H1 (cell line): ENCODE measurements at regions of chr5 and their contacts with region 1.

Region 1: GRCh38 chr5:31232273-31232888 is 38.9 kb downstream of the CDH6 start:
- DNase-seq: peak in 1 of 2 experiments; percentile 2
- H3K4me3 ChIP-seq: no peak overlapping the region
- H3K27ac ChIP-seq: no peak overlapping the region
- H3K4me1 ChIP-seq: peaks cover 0 to 3% (median 0%) of the 10 kb centered on the region in 4 experiments; a peak in 1 of 7 replicates
- H3K27me3 ChIP-seq: no peaks in the 10 kb centered on the region
- CTCF ChIP-seq: peak in 2 of 3 experiments; percentile 75; a peak in 3 of 4 replicates
- EP300 ChIP-seq: no peak
- POLR2A ChIP-seq: no peak
- RAD21 ChIP-seq: peak; percentile 90 to 96

Region 2: DNA sequence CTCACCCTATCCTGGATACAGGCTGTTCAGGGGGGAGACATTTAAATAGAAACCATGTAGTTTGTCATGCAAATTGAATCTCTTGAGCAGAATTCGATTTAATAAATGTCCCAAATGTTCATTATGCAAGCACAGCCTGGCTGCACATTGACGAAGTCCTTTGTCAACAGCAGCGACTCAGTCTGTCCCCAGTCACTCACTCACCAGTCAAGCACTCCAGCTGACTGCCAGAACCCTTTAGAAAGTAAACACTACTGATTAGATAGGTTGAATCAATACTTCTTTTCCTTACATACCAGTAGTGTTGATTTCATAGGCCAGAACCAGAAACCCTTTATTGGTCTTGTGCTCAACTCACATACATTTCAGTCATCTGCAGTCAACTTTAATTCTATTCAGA is 11.4 kb before region 1 on chr5:
- CTCF ChIA-PET with region 1: interaction called, 14 read pairs
- POLR2A ChIA-PET with region 1: no interaction called
- DNase-seq: no peak
- H3K4me3 ChIP-seq: no peak overlapping the region
- H3K27ac ChIP-seq: no peak overlapping the region
- H3K4me1 ChIP-seq: no peaks in the 10 kb centered on the region
- H3K27me3 ChIP-seq: no peaks in the 10 kb centered on the region
- CTCF ChIP-seq: no peak
- EP300 ChIP-seq: no peak
- POLR2A ChIP-seq: no peak
- RAD21 ChIP-seq: no peak

Region 3: DNA sequence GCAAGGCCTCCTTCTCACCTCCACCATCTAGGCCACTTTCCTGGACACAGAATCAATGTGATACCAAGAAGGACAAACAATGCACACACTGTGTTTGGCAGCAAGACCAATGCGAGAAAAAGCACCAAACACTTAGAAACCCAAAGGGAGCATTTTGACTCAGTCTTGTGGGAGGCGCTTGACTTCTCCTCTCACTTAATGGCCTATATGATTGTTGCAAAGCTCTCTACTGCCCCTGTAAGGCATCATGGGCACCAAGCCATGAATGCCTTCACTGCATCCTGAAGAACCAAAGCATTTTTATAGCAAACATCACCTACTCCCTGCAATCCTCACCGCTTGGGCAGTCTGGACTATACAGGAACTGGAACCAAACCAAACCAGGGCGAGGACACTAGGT is 18.7 kb after region 1 on chr5:
- CTCF ChIA-PET with region 1: interaction called, 16 read pairs
- POLR2A ChIA-PET with region 1: no interaction called
- DNase-seq: no peak
- H3K4me3 ChIP-seq: no peak overlapping the region
- H3K27ac ChIP-seq: no peak overlapping the region
- H3K4me1 ChIP-seq: no peaks in the 10 kb centered on the region
- H3K27me3 ChIP-seq: no peaks in the 10 kb centered on the region
- CTCF ChIP-seq: peak in 2 of 3 experiments; percentile 2 to 33; a peak in 1 of 4 replicates
- EP300 ChIP-seq: no peak
- POLR2A ChIP-seq: no peak
- RAD21 ChIP-seq: peak; percentile 24 to 46; a peak in 3 of 4 replicates

Region 4: DNA sequence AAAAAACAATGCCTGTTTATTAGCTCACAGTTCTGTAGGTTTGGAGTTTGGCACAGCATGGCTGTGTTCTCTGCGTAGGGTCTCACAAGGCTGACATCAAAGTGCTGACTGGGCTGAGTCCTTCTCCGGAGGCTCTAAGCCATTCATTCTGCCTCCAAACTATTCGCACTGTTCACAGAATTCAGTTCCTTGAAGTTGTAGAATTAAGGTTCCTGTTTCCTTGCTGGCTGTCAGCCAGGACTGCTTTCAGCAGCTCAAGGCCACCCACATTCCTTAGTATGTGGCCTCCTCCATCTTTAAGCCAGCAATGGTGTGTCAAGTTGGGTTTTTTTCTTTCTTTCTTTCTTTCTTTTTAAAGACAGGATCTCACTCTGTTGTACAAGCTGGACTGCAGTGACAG is 123.0 kb after region 1 on chr5:
- CTCF ChIA-PET with region 1: no interaction called
- POLR2A ChIA-PET with region 1: no interaction called
- DNase-seq: no peak
- H3K4me3 ChIP-seq: no peak overlapping the region
- H3K27ac ChIP-seq: no peak overlapping the region
- H3K4me1 ChIP-seq: no peaks in the 10 kb centered on the region
- H3K27me3 ChIP-seq: no peaks in the 10 kb centered on the region
- CTCF ChIP-seq: no peak
- EP300 ChIP-seq: no peak
- POLR2A ChIP-seq: no peak
- RAD21 ChIP-seq: no peak

Region 5: GRCh38 chr5:31757806-31758205 is 525.4 kb after region 1 on chr5:
- CTCF ChIA-PET with region 1: no interaction called
- POLR2A ChIA-PET with region 1: no interaction called
- DNase-seq: no peak
- H3K4me3 ChIP-seq: no peak overlapping the region
- H3K27ac ChIP-seq: no peak overlapping the region
- H3K4me1 ChIP-seq: peaks cover 5 to 12% (median 8%) of the 10 kb centered on the region in 4 experiments; a peak in 6 of 7 replicates
- H3K27me3 ChIP-seq: peaks cover 4 to 23% (median 15%) of the 10 kb centered on the region in 4 experiments
- CTCF ChIP-seq: no peak
- EP300 ChIP-seq: no peak
- POLR2A ChIP-seq: no peak
- RAD21 ChIP-seq: no peak